ENCODE measurements at regions of chr6 and their contacts with region 1.

Region 1: GRCh38 chr6:26204332-26205165 is 117.3 kb downstream of the HFE start:
- DNase-seq: peak; percentile 96
- ATAC-seq: peak; percentile 65
- H3K4me3 ChIP-seq: peak overlapping the region; percentile 76 to 94 (median 81)
- H3K4me3 Mint-ChIP-seq: no peak overlapping the region
- H3K27ac ChIP-seq: peak overlapping the region; percentile 88 to 96
- H3K27ac Mint-ChIP-seq: no peak overlapping the region
- H3K4me1 ChIP-seq: peaks cover 26 to 38% of the 10 kb centered on the region in 2 donors
- H3K4me1 Mint-ChIP-seq: peaks cover 30% of the 10 kb centered on the region
- H3K27me3 ChIP-seq: no peaks in the 10 kb centered on the region
- H3K27me3 Mint-ChIP-seq: no peaks in the 10 kb centered on the region
- CTCF ChIP-seq: no peak

Region 2: DNA sequence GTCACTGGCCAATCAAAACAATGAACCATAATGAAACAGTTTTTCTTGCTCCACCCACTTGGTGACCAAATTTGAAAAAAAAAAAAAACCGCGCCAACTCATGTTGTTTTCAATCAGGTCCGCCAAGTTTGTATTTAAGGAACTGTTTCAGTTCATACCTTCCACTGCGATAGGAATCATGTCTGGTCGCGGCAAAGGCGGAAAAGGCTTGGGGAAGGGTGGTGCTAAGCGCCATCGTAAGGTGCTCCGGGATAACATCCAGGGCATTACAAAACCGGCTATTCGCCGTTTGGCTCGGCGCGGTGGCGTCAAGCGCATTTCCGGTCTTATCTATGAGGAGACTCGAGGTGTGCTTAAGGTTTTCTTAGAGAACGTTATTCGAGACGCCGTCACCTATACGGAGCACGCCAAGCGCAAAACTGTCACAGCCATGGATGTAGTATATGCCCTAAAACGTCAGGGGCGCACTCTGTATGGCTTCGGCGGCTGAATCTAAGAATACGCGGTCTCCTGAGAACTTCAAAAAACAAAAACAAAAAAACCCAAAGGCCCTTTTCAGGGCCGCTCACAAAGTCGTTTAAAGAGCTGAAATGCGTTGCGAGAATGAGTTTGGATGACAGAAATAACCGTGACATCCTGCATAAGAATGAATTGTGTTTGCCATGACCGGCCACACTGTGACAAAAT is 100.6 kb before region 1 on chr6:
- CTCF ChIA-PET with region 1: no interaction called
- POLR2A ChIA-PET with region 1: interaction called, 14 read pairs
- intact Hi-C with region 1: loop called (anchors 2 kb)
- DNase-seq: peak; percentile 98
- ATAC-seq: peak; percentile 87
- H3K4me3 ChIP-seq: peak overlapping the region; percentile 52 to 81 (median 62)
- H3K4me3 Mint-ChIP-seq: peak overlapping the region; percentile 88
- H3K27ac ChIP-seq: peak overlapping the region; percentile 78 to 79
- H3K27ac Mint-ChIP-seq: peak overlapping the region; percentile 99
- H3K4me1 ChIP-seq: peaks cover 5 to 15% of the 10 kb centered on the region in 2 donors
- H3K4me1 Mint-ChIP-seq: peaks cover 15% of the 10 kb centered on the region
- H3K27me3 ChIP-seq: no peaks in the 10 kb centered on the region
- H3K27me3 Mint-ChIP-seq: no peaks in the 10 kb centered on the region
- CTCF ChIP-seq: peak; percentile 66

Region 3: DNA sequence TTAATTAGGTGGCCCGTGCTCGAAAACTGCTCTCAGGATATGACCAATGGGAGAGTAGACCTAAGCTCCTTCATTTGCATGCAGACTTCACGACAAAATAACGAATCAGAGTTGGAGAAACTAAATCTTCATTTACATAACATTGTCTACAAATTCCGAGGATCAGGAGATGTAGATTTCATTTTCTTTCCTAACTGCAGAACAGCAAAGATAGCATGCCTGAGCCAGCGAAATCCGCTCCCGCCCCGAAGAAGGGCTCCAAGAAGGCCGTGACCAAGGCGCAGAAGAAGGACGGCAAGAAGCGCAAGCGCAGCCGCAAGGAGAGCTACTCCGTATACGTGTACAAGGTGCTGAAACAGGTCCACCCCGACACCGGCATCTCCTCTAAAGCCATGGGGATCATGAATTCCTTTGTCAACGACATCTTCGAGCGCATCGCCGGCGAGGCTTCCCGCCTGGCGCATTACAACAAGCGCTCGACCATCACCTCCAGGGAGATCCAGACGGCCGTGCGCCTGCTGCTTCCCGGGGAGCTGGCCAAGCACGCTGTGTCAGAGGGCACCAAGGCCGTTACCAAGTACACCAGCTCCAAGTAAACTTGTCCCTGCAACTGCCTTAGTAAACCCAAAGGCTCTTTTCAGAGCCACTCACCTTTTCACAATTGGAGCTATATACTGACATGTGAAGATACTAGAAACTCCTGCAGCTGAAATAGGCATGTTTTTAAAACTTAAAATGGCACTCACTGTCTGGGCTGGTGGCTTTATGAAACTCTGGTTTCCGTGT is 20.8 kb before region 1 on chr6:
- CTCF ChIA-PET with region 1: interaction called, 29 read pairs
- POLR2A ChIA-PET with region 1: interaction called, 105 read pairs
- intact Hi-C with region 1: loop called (anchors 2 kb)
- DNase-seq: peak; percentile 84
- ATAC-seq: peak; percentile 89
- H3K4me3 ChIP-seq: peak overlapping the region; percentile 51 to 73 (median 71)
- H3K4me3 Mint-ChIP-seq: peak overlapping the region; percentile 91
- H3K27ac ChIP-seq: peak overlapping the region in 1 of 2 donors; percentile 61
- H3K27ac Mint-ChIP-seq: peak overlapping the region; percentile 85
- H3K4me1 ChIP-seq: peaks cover 13 to 22% of the 10 kb centered on the region in 2 donors
- H3K4me1 Mint-ChIP-seq: peaks cover 25% of the 10 kb centered on the region
- H3K27me3 ChIP-seq: no peaks in the 10 kb centered on the region
- H3K27me3 Mint-ChIP-seq: no peaks in the 10 kb centered on the region
- CTCF ChIP-seq: no peak

Region 4: DNA sequence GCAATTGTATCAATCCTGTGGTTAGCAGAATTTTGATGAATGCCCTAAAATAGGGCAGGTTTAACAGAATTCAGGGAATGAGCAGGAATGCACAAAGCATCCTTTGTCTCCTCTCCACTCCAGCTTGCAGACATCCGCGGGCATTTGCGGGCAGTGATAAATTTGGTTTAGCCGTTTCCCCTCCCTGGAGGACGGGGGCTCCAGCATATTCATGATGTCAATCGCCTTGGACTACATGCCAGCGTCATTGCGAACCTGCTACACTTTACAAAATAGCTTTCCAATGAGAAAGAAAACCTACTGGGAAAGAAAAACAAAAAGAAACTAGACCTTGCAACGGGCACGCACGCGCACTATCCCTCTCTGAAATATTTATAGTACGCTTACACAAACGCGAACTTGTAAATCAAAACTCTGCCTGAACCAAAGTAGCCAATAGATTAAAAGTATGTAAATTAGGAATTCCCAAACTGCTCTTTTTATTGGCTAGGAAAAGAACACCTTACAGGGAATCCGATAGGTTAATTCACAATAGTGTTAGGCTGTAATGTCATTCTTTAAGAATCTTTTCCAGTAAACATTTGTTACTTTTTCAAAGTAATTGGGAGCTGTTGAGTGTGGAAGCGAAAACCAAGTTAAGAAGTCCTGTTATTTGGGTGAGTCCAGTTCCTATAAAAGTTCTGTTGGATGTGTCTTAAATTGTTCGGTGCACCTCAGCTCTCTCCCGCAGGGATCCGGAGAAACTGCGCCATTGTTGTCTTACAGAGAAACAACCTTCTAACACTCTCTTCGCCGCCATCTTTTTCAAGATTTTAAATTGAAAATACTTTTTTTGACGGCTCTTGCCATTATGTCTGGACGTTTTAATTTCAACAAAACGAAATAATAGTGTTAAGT is 19.3 kb after region 1 on chr6:
- CTCF ChIA-PET with region 1: interaction called, 5 read pairs
- POLR2A ChIA-PET with region 1: interaction called, 9 read pairs
- intact Hi-C with region 1: loop called (anchors 2 kb)
- DNase-seq: peak; percentile 81
- ATAC-seq: peak; percentile 87
- H3K4me3 ChIP-seq: peak overlapping the region; percentile 56 to 97 (median 75)
- H3K4me3 Mint-ChIP-seq: no peak overlapping the region
- H3K27ac ChIP-seq: peak overlapping the region; percentile 85 to 95
- H3K27ac Mint-ChIP-seq: no peak overlapping the region
- H3K4me1 ChIP-seq: peaks cover 4 to 14% of the 10 kb centered on the region in 2 donors
- H3K4me1 Mint-ChIP-seq: peaks cover 8% of the 10 kb centered on the region
- H3K27me3 ChIP-seq: no peaks in the 10 kb centered on the region
- H3K27me3 Mint-ChIP-seq: no peaks in the 10 kb centered on the region
- CTCF ChIP-seq: no peak

Region 5: GRCh38 chr6:26234421-26235296 is 30.1 kb after region 1 on chr6:
- CTCF ChIA-PET with region 1: no interaction called
- POLR2A ChIA-PET with region 1: interaction called, 129 read pairs
- intact Hi-C with region 1: loop called (anchors 1 kb)
- DNase-seq: peak; percentile 87
- ATAC-seq: peak; percentile 76
- H3K4me3 ChIP-seq: peak overlapping the region; percentile 70 to 99 (median 85)
- H3K4me3 Mint-ChIP-seq: peak overlapping the region; percentile 93
- H3K27ac ChIP-seq: peak overlapping the region; percentile 86 to 90
- H3K27ac Mint-ChIP-seq: peak overlapping the region; percentile 95
- H3K4me1 ChIP-seq: peaks cover 13 to 21% of the 10 kb centered on the region in 2 donors
- H3K4me1 Mint-ChIP-seq: peaks cover 23% of the 10 kb centered on the region
- H3K27me3 ChIP-seq: no peaks in the 10 kb centered on the region
- H3K27me3 Mint-ChIP-seq: no peaks in the 10 kb centered on the region
- CTCF ChIP-seq: no peak

Region 6: GRCh38 chr6:26240154-26241032 is 35.8 kb after region 1 on chr6:
- CTCF ChIA-PET with region 1: no interaction called
- POLR2A ChIA-PET with region 1: interaction called, 129 read pairs
- intact Hi-C with region 1: loop called (anchors 1 kb)
- DNase-seq: peak; percentile 91
- ATAC-seq: peak; percentile 80
- H3K4me3 ChIP-seq: peak overlapping the region; percentile 55 to 87 (median 67)
- H3K4me3 Mint-ChIP-seq: peak overlapping the region; percentile 87
- H3K27ac ChIP-seq: peak overlapping the region; percentile 76 to 93
- H3K27ac Mint-ChIP-seq: peak overlapping the region; percentile 94
- H3K4me1 ChIP-seq: peaks cover 6 to 16% of the 10 kb centered on the region in 2 donors
- H3K4me1 Mint-ChIP-seq: peaks cover 20% of the 10 kb centered on the region
- H3K27me3 ChIP-seq: no peaks in the 10 kb centered on the region
- H3K27me3 Mint-ChIP-seq: no peaks in the 10 kb centered on the region
- CTCF ChIP-seq: no peak

Region 7: GRCh38 chr6:26457806-26458688 is 253.5 kb after region 1 on chr6 and contains the start of gene BTN2A1:
- CTCF ChIA-PET with region 1: no interaction called
- POLR2A ChIA-PET with region 1: no interaction called
- intact Hi-C with region 1: no loop called
- DNase-seq: peak; percentile 89
- ATAC-seq: peak; percentile 96
- H3K4me3 ChIP-seq: peak within 1 kb of the TSS; percentile 75 to 96 (median 92)
- H3K4me3 Mint-ChIP-seq: peak within 1 kb of the TSS; percentile 100
- H3K27ac ChIP-seq: peak within 1 kb of the TSS; percentile 77 to 89
- H3K27ac Mint-ChIP-seq: peak within 1 kb of the TSS; percentile 98
- H3K4me1 ChIP-seq: peaks cover 30 to 47% of the 10 kb centered on the region in 2 donors
- H3K4me1 Mint-ChIP-seq: peaks cover 72% of the 10 kb centered on the region
- H3K27me3 ChIP-seq: no peaks in the 10 kb centered on the region
- H3K27me3 Mint-ChIP-seq: no peaks in the 10 kb centered on the region
- CTCF ChIP-seq: no peak
- total RNA-seq, gene BTN2A1: 63.3 and 69.6 TPM in 2 replicates

Measured in B cell (primary cell).